Transverse colon (tissue), 4 donors: ENCODE measurements at regions of chr2 and their contacts with region 1.

Region 1: GRCh38 chr2:102020596-102021181 is 28.9 kb downstream of the IL1R2 start:
- DNase-seq: peak; percentile 89
- H3K4me3 ChIP-seq: no peak overlapping the region
- H3K27ac ChIP-seq: peak overlapping the region in 3 of 4 donors; percentile 12 to 58 (median 44)
- H3K4me1 ChIP-seq: peaks cover 0 to 10% (median 0%) of the 10 kb centered on the region in 4 donors
- H3K27me3 ChIP-seq: no peaks in the 10 kb centered on the region
- CTCF ChIP-seq: peak; percentile 98 to 99 (median 98)
- EP300 ChIP-seq: no peak
- POLR2A ChIP-seq: no peak

Region 2: DNA sequence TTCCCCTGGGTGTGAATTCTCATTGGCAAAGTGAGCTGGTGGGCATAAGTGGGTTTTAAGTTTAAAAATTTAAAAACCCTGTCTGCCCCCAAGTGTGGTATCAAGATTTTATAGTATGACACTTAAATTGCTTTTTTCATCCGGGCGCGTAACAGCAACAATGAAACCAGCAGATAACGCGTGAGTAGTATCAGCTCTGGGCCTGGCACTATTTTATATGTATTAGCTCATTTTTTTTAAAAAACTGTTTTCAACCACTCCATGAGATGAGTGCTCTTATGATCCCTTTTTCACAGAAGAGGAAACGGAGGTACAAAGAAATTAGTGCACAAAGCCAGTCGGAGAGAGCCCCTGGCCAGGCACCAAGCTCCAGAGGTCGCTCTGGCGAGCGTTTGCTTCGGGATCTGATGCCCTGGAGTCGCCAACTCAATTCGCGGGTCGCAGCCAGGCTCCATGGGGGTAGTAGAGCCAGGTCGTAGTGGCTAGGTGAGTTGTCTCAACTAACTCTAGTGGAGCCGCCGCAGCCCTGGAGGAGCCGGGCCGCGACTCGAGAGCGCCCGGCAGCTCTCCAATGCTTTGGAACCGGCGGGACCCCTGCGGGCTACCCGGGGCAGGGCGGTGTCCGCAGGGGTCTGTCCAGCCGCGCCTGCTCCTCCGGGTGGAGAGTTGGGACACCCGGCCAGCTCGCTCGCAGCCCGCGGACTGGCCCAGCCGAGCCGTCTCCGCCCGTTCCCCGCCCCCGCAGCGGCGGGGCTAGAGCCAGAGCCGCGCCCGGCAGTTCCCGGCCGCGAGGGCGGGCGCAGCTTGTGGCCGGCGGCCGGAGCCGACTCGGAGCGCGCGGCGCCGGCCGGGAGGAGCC is 121.5 kb after region 1 on chr2 and contains the start of gene IL1R1:
- in situ Hi-C with region 1: loop called in 1 of 4 experiments (anchors 10 kb)
- intact Hi-C with region 1: no loop called
- DNase-seq: peak; percentile 81
- H3K4me3 ChIP-seq: peak within 1 kb of the TSS; percentile 49 to 71 (median 58)
- H3K27ac ChIP-seq: peak within 1 kb of the TSS; percentile 88 to 93 (median 92)
- H3K4me1 ChIP-seq: peaks cover 0 to 6% (median 3%) of the 10 kb centered on the region in 4 donors
- H3K27me3 ChIP-seq: no peaks in the 10 kb centered on the region
- CTCF ChIP-seq: no peak
- EP300 ChIP-seq: no peak
- POLR2A ChIP-seq: peak; percentile 75
- total RNA-seq, gene IL1R1: 20.2 to 58.0 (median 36.2) TPM

Region 3: DNA sequence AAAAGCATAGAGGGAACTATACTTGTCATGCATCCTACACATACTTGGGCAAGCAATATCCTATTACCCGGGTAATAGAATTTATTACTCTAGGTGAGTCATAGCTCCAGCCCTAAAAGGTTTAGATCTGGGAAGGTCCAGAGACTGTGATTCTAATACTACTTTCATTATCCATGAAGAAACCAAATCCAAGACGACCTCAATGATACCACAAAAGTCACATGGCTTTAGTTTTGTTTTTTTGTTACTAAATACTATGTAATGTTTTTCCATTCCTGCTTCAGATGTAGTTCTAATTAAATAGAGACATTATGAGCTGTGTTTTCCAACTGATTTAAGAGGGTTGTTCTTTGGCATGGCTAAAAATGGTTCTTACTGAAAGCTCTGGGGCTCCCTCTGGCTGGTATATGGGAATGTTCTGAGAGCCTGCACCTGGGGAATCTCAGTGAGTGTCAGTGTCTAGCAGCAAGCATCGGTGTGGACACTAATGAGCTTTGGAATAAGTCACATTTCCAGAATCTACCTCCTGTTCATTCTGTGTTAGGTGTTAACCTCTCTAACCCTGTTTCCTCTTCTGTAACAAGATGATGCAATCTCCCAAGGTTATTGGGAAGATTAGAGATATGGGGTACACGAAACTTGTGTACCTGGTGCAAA is 145.6 kb after region 1 on chr2:
- in situ Hi-C with region 1: loop called in 3 of 4 experiments (anchors 10 to 25 kb)
- intact Hi-C with region 1: no loop called
- DNase-seq: peak; percentile 27
- H3K4me3 ChIP-seq: no peak overlapping the region
- H3K27ac ChIP-seq: peak overlapping the region; percentile 29 to 36 (median 33)
- H3K4me1 ChIP-seq: peaks cover 5 to 17% (median 11%) of the 10 kb centered on the region in 4 donors
- H3K27me3 ChIP-seq: no peaks in the 10 kb centered on the region
- CTCF ChIP-seq: peak; percentile 44 to 65 (median 59)
- EP300 ChIP-seq: no peak
- POLR2A ChIP-seq: no peak

Region 4: DNA sequence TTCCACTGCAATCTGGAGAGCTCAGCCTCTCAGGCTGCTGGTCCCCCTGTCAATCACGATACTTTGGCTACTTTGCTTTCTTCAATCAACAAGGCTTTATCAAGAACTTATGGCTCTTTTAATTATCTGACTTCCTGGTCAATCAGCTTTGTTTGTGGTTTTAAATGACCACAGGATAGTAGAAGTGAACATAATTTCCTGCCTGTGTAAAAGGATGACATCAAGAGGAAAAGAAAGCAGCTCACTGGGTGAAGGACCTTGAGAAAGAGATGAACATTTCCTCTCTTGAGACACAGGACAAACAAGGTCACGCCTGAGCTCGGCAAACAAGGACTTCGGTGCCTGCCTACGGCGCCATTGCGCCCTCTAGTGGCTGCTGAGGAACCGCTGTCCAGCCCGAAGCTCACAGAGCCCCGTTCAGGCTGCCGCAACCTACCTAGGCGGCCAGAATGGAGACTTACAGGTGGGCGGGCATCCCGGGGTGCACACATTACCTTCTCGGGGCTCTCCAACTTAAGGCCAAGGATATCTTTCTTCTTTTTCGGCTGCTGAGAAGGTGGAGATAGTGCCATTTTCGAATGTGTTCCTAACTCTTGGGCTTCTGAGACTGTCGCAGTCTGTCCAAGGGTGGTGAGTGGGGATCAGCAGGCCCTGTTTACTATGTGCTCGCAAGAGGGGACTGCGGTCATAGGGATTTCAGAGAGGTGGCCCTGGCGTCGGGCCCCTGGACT is 220.1 kb after region 1 on chr2:
- in situ Hi-C with region 1: loop called (anchors 5 to 10 kb)
- intact Hi-C with region 1: loop called (anchors 2 kb)
- DNase-seq: peak; percentile 94
- H3K4me3 ChIP-seq: no peak overlapping the region
- H3K27ac ChIP-seq: peak overlapping the region; percentile 55 to 82 (median 72)
- H3K4me1 ChIP-seq: peaks cover 0 to 9% (median 6%) of the 10 kb centered on the region in 4 donors
- H3K27me3 ChIP-seq: no peaks in the 10 kb centered on the region
- CTCF ChIP-seq: peak; percentile 97 to 98 (median 97)
- EP300 ChIP-seq: peak; percentile 35
- POLR2A ChIP-seq: no peak

Region 5: GRCh38 chr2:102442967-102443828 is 422.5 kb after region 1 on chr2:
- in situ Hi-C with region 1: loop called in 3 of 4 experiments (anchors 10 to 25 kb)
- intact Hi-C with region 1: no loop called
- DNase-seq: peak; percentile 22
- H3K4me3 ChIP-seq: no peak overlapping the region
- H3K27ac ChIP-seq: peak overlapping the region in 1 of 4 donors; percentile 11
- H3K4me1 ChIP-seq: peaks cover 0 to 9% (median 0%) of the 10 kb centered on the region in 4 donors
- H3K27me3 ChIP-seq: no peaks in the 10 kb centered on the region
- CTCF ChIP-seq: peak; percentile 59 to 75 (median 69)
- EP300 ChIP-seq: no peak
- POLR2A ChIP-seq: no peak

Region 6: GRCh38 chr2:102910724-102911123 is 890.0 kb after region 1 on chr2:
- in situ Hi-C with region 1: no loop called
- intact Hi-C with region 1: no loop called
- DNase-seq: no peak
- H3K4me3 ChIP-seq: no peak overlapping the region
- H3K27ac ChIP-seq: no peak overlapping the region
- H3K4me1 ChIP-seq: no peaks in the 10 kb centered on the region
- H3K27me3 ChIP-seq: no peaks in the 10 kb centered on the region
- CTCF ChIP-seq: no peak
- EP300 ChIP-seq: no peak
- POLR2A ChIP-seq: no peak